GM12878 (cell line): ENCODE measurements at regions of chr3 and their contacts with region 1.

Region 1: GRCh38 chr3:186534113-186534669 is 10.0 kb downstream of the CRYGS start:
- DNase-seq: peak; percentile 95
- ATAC-seq: peak; percentile 87
- H3K4me3 ChIP-seq: peak overlapping the region; percentile 13; the same call in 1 of the 2 replicates
- H3K27ac ChIP-seq: peak overlapping the region; percentile 86
- H3K4me1 ChIP-seq: peaks cover 78% of the 10 kb centered on the region
- H3K27me3 ChIP-seq: no peaks in the 10 kb centered on the region
- CTCF ChIP-seq: no peak
- EP300 ChIP-seq: peak; percentile 88 to 89
- POLR2A ChIP-seq: no peak
- RAD21 ChIP-seq: 0 out of 2 replicates have a peak, but pooled peaks have one; percentile 12

Region 2: GRCh38 chr3:185983495-185984141 is 550.6 kb before region 1 on chr3:
- CTCF ChIA-PET with region 1: interaction called, 73 read pairs
- POLR2A ChIA-PET with region 1: interaction called, 4 read pairs
- RAD21 ChIA-PET with region 1: interaction called, 133 read pairs
- SMC1A ChIA-PET with region 1: interaction called, 85 read pairs
- in situ Hi-C with region 1: loop called (anchors 5 kb)
- intact Hi-C with region 1: no loop called
- DNase-seq: no peak
- ATAC-seq: peak; percentile 96
- H3K4me3 ChIP-seq: no peak overlapping the region
- H3K27ac ChIP-seq: no peak overlapping the region
- H3K4me1 ChIP-seq: no peaks in the 10 kb centered on the region
- H3K27me3 ChIP-seq: no peaks in the 10 kb centered on the region
- CTCF ChIP-seq: peak; percentile 84 to 87 (median 86)
- EP300 ChIP-seq: no peak
- POLR2A ChIP-seq: no peak
- RAD21 ChIP-seq: peak; percentile 99

Region 3: GRCh38 chr3:186259612-186260383 is 274.4 kb before region 1 on chr3:
- CTCF ChIA-PET with region 1: interaction called, 847 read pairs
- POLR2A ChIA-PET with region 1: interaction called, 16 read pairs
- RAD21 ChIA-PET with region 1: interaction called, 495 read pairs
- SMC1A ChIA-PET with region 1: interaction called, 655 read pairs
- in situ Hi-C with region 1: loop called (anchors 5 kb)
- intact Hi-C with region 1: no loop called
- DNase-seq: no peak
- ATAC-seq: peak; percentile 89
- H3K4me3 ChIP-seq: no peak overlapping the region
- H3K27ac ChIP-seq: no peak overlapping the region
- H3K4me1 ChIP-seq: peaks cover 14% of the 10 kb centered on the region
- H3K27me3 ChIP-seq: no peaks in the 10 kb centered on the region
- CTCF ChIP-seq: peak; percentile 96 to 99 (median 97)
- EP300 ChIP-seq: no peak
- POLR2A ChIP-seq: no peak
- RAD21 ChIP-seq: peak; percentile 94

Region 4: DNA sequence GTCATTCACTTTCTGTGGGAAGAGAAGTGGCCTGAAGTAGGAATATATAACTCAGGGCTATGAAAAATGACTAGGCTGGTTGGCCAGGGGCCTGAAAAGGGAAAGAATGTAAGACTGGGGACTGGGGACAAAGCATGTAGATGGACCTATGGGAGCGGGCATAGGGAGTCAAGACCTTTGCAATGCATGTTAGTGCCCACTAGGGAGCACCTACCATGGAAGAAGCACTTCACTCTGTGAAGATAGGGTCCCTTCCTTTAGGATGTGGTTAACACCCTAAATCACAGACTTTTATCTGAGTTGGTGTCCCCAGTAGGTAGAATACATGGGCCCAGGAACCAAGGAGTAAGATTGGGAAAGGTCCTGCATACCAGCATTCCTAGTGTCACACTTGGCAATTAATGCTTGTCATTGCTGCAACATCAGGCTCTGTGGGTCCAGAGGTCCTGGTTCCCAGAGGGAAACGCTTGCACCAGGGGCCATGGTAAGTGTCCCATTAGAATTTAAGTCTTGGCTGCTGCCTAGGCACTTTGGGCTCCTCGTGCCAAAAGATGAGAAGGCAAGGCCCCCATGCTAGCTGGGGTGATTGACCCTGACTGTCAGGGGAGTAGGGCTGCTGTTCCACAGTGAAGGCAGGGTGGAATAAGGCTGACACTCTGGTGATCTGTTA is 69.6 kb before region 1 on chr3:
- CTCF ChIA-PET with region 1: interaction called, 32 read pairs
- POLR2A ChIA-PET with region 1: no interaction called
- RAD21 ChIA-PET with region 1: interaction called, 25 read pairs
- SMC1A ChIA-PET with region 1: interaction called, 28 read pairs
- in situ Hi-C with region 1: no loop called
- intact Hi-C with region 1: loop called (anchors 5 kb)
- DNase-seq: no peak
- ATAC-seq: peak; percentile 67
- H3K4me3 ChIP-seq: no peak overlapping the region
- H3K27ac ChIP-seq: no peak overlapping the region
- H3K4me1 ChIP-seq: no peaks in the 10 kb centered on the region
- H3K27me3 ChIP-seq: no peaks in the 10 kb centered on the region
- CTCF ChIP-seq: peak; percentile 4 to 49 (median 36); a peak in 3 of 6 replicates
- EP300 ChIP-seq: no peak
- POLR2A ChIP-seq: no peak
- RAD21 ChIP-seq: peak; percentile 18; the same call in 1 of the 2 replicates

Region 5: DNA sequence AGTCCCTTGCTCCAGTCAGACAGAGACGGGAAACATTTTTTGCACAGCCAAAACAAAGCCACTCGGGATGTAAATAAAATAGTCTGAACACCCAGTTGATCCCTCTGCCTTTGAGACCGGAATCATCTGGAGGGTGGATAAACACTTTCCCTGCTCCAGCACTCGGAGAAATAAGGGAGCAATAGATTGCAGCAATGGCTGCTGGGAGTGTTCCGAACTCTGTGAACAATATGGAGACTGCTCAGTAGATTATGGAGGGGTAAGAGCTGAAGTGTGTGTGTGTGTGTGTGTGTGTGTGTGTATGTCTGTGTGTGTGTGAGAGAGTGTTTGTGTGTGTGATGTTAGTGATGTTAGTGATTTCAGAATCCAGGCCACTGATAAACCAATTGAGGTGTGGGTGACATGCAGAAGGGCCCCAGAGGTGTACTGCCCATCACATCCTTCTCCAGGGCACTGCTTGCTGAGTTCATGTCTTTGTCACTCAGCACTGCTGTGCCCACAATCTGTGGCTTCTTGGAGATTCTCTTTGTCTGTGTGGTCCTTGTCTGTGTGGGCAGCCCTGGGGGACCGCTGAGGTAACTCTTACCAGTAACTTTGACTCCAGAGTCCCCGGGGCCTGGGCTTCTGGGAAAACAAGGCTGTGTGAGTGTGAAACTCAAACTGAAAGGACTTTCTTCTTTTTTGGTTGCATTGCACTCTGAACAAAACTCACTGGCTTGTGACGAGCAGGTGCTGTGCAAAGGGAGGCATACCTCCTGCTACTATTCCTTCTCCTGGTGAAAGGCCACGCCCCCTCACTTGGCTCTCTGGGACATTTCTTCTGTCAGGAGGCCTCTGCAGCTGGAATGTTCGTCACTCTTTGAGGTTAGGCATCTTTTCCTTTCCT is 13.0 kb before region 1 on chr3:
- CTCF ChIA-PET with region 1: interaction called, 282 read pairs
- POLR2A ChIA-PET with region 1: interaction called, 25 read pairs
- RAD21 ChIA-PET with region 1: interaction called, 224 read pairs
- SMC1A ChIA-PET with region 1: interaction called, 429 read pairs
- in situ Hi-C with region 1: no loop called
- intact Hi-C with region 1: loop called (anchors 2 kb)
- DNase-seq: peak; percentile 80
- ATAC-seq: peak; percentile 71
- H3K4me3 ChIP-seq: no peak overlapping the region
- H3K27ac ChIP-seq: peak overlapping the region; percentile 78
- H3K4me1 ChIP-seq: peaks cover 54% of the 10 kb centered on the region
- H3K27me3 ChIP-seq: no peaks in the 10 kb centered on the region
- CTCF ChIP-seq: no peak
- EP300 ChIP-seq: no peak
- POLR2A ChIP-seq: no peak
- RAD21 ChIP-seq: no peak